IMR-90 (cell line): ENCODE measurements at regions of chr7 and their contacts with region 1.

Region 1: DNA sequence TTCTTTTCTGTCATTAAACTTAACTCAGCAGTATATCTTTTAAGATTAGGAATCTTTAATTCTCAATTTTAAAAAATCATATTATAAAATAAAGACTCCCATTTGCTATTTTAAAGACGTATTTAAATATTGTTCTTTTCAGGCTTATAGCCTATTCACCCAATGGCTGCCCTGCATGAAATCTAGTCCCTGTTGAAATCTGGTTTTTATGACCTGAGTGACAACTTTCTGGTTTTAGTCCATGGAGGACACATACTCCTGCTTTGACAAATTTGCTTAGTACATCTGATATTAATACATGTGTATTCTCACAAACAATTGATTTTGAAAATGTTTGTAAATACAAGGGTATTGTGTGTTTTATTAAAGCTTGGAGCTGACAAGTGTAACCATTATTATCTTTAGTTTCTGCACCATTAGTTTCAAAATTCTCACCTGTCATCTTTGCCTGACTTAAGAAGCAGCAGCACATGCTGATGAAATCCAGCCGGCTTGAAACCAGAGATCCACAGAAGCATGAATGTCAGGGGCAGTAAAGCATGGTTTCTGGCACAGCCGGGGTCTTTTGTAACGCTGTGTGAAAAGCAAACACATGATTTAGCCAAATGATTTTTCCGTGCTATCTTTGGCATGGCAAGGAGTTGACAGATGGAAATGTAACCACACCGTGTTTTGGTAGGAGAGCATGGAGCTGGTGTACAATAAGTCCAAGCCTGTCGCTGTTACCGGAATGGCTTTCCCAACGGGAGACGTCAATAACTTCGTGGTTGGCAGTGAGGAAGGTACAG is 262.8 kb downstream of the DYNC1I1 start:
- DNase-seq: no peak
- ATAC-seq: no peak
- H3K4me3 ChIP-seq: no peak overlapping the region
- H3K27ac ChIP-seq: no peak overlapping the region
- H3K4me1 ChIP-seq: no peaks in the 10 kb centered on the region
- H3K27me3 ChIP-seq: 0 out of 2 replicates have a peak, but pooled peaks cover 2% of the 10 kb centered on the region
- CTCF ChIP-seq: no peak
- POLR2A ChIP-seq: no peak
- RAD21 ChIP-seq: no peak

Region 2: DNA sequence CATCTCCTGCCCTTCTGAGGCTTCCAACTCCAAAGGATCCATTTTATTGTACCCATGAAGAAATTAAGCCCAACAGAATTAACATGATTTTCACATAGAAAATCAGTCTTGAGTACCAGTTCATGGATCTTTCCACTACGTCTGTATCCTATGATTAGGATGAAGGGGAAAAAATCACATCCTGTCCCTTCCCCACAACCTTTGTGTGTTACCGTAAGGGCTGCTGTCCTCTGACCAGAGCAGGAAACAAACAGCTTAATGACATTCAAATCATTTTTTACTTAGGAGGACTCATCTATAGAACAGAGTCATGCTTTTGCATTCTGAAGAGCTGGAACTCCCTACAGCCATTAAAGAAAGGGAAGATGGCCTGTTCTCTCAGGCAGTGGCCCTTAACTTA is 21.3 kb before region 1 on chr7:
- CTCF ChIA-PET with region 1: no interaction called
- POLR2A ChIA-PET with region 1: no interaction called
- dilution Hi-C with region 1: no loop called
- in situ Hi-C with region 1: no loop called
- intact Hi-C with region 1: loop called (anchors 2 kb)
- DNase-seq: no peak
- ATAC-seq: no peak
- H3K4me3 ChIP-seq: no peak overlapping the region
- H3K27ac ChIP-seq: no peak overlapping the region
- H3K4me1 ChIP-seq: no peaks in the 10 kb centered on the region
- H3K27me3 ChIP-seq: no peaks in the 10 kb centered on the region
- CTCF ChIP-seq: no peak
- POLR2A ChIP-seq: no peak
- RAD21 ChIP-seq: no peak